Heart left ventricle (tissue), 16 donors: ENCODE measurements at regions of chr15 and their contacts with region 1.

Region 1: DNA sequence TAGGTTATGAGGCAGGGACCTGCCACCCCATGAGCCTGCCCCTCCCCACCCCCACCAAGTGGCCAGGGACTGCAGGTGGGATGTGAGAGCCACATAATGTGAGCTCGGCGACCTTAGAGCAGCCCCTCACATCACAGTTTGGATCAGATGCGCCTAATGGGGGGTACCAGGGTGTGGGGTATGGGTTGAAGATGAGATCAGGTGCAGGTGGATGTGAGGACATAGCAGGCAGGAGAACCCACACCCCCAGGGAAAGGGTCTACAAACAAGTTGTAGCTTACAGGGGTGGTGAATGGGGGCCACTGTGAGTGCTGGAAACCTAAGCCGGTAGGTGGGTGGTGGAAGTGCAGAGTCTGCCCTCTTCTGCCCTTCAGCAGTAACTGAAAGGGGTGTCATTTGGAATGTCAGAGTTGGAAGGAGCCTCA is 94.0 kb downstream of the CORO2B start:
- DNase-seq: no peak
- ATAC-seq: no peak
- H3K4me3 ChIP-seq: no peak overlapping the region
- H3K27ac ChIP-seq: no peak overlapping the region
- H3K4me1 ChIP-seq: peaks cover 0 to 34% (median 10%) of the 10 kb centered on the region in 12 donors
- H3K27me3 ChIP-seq: no peaks in the 10 kb centered on the region
- CTCF ChIP-seq: peak in 3 of 12 donors; percentile 19 to 32 (median 20)
- POLR2A ChIP-seq: no peak

Region 2: GRCh38 chr15:68749793-68750192 is 77.0 kb after region 1 on chr15:
- intact Hi-C with region 1: loop called in 1 of 10 experiments (anchors 5 kb)
- DNase-seq: peak in 3 of 5 donors; percentile 29 to 38 (median 31)
- ATAC-seq: peak; percentile 55 to 87 (median 76)
- H3K4me3 ChIP-seq: no peak overlapping the region
- H3K27ac ChIP-seq: peak overlapping the region in 1 of 12 donors; percentile 46
- H3K4me1 ChIP-seq: no peaks in the 10 kb centered on the region
- H3K27me3 ChIP-seq: no peaks in the 10 kb centered on the region
- CTCF ChIP-seq: no peak
- POLR2A ChIP-seq: no peak

Region 3: GRCh38 chr15:68820295-68821189 is 147.7 kb after region 1 on chr15 and contains the start of gene ANP32A:
- intact Hi-C with region 1: no loop called
- DNase-seq: peak; percentile 97 to 99 (median 99)
- ATAC-seq: peak; percentile 81 to 92 (median 88)
- H3K4me3 ChIP-seq: peak within 1 kb of the TSS; percentile 80 to 98 (median 94)
- H3K27ac ChIP-seq: peak within 1 kb of the TSS; percentile 97 to 100 (median 100)
- H3K4me1 ChIP-seq: peaks cover 0 to 30% (median 19%) of the 10 kb centered on the region in 12 donors
- H3K27me3 ChIP-seq: no peaks in the 10 kb centered on the region
- CTCF ChIP-seq: no peak
- POLR2A ChIP-seq: peak in 1 of 2 donors; percentile 88
- total RNA-seq, gene ANP32A: 55.7 to 202 (median 142) TPM

Region 4: GRCh38 chr15:68924866-68925560 is 252.2 kb after region 1 on chr15:
- intact Hi-C with region 1: loop called in 1 of 10 experiments (anchors 5 kb)
- DNase-seq: peak; percentile 58 to 81 (median 71)
- ATAC-seq: peak in 3 of 4 donors; percentile 86 to 91 (median 88)
- H3K4me3 ChIP-seq: no peak overlapping the region
- H3K27ac ChIP-seq: no peak overlapping the region
- H3K4me1 ChIP-seq: peaks cover 0 to under 1% (median 0%) of the 10 kb centered on the region in 12 donors
- H3K27me3 ChIP-seq: peaks cover 0 to 5% (median 0%) of the 10 kb centered on the region in 9 donors
- CTCF ChIP-seq: peak; percentile 62 to 92 (median 76)
- POLR2A ChIP-seq: no peak